Panc1 (cell line): ENCODE measurements at regions of chr16 and their contacts with region 1.

Region 1: GRCh38 chr16:9723136-9723535 is 459.1 kb downstream of the GRIN2A start:
- DNase-seq: no peak
- ATAC-seq: no peak
- H3K4me3 ChIP-seq: no peak overlapping the region
- H3K27ac ChIP-seq: no peak overlapping the region
- H3K4me1 ChIP-seq: no peaks in the 10 kb centered on the region
- H3K27me3 ChIP-seq: no peaks in the 10 kb centered on the region
- CTCF ChIP-seq: no peak

Region 2: DNA sequence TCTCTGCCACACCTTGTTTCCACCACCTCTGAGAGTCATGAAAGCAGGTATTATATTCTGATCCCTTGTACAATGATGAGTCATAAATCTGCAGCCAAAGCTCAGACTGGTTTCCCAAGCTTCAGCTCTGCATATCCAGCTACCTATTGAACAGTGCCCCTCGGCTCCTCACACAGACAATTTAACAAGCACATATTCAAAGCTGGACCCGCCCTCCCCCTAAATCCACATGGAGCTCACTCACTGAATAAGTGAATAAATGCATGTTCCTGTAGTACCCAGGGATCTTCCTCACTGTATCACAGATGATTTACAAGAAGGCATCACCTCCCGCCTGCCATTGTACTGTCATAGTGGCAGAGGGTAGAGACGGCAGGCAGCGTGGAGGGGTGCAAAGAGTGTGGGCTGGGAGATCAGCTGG is 57.3 kb before region 1 on chr16:
- CTCF ChIA-PET with region 1: no interaction called
- POLR2A ChIA-PET with region 1: no interaction called
- in situ Hi-C with region 1: no loop called
- intact Hi-C with region 1: loop called (anchors 10 kb)
- DNase-seq: no peak
- ATAC-seq: no peak
- H3K4me3 ChIP-seq: no peak overlapping the region
- H3K27ac ChIP-seq: no peak overlapping the region
- H3K4me1 ChIP-seq: no peaks in the 10 kb centered on the region
- H3K27me3 ChIP-seq: no peaks in the 10 kb centered on the region
- CTCF ChIP-seq: no peak

Region 3: DNA sequence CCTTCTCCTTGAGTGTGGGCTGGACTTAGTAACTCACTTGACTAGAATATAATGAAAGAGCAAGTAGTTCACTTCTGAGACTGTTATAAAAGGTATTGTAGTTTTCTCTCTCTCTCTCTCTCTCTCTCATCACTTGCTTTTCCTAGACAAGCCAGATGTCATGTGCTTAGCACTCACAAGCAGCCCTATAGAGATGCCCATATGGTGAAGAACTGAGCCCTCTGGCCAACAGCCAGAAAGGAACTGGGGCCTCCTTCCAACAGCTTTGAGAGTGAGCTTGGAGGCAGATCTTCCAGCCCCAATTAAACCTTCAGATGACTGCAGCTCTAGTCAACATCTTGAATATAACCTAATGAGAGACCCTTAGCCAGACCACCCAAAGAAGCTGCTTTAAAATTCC is 18.6 kb after region 1 on chr16:
- CTCF ChIA-PET with region 1: no interaction called
- POLR2A ChIA-PET with region 1: no interaction called
- in situ Hi-C with region 1: no loop called
- intact Hi-C with region 1: no loop called
- DNase-seq: no peak
- ATAC-seq: no peak
- H3K4me3 ChIP-seq: no peak overlapping the region
- H3K27ac ChIP-seq: no peak overlapping the region
- H3K4me1 ChIP-seq: no peaks in the 10 kb centered on the region
- H3K27me3 ChIP-seq: no peaks in the 10 kb centered on the region
- CTCF ChIP-seq: no peak